Caco-2 (cell line): ENCODE measurements at regions of chr2 and their contacts with region 1.

Region 1: GRCh38 chr2:69734035-69734631 is 7.8 kb upstream of the ANXA4 start:
- DNase-seq: peak; percentile 61 to 77
- H3K4me3 ChIP-seq: no peak overlapping the region
- H3K4me3 Mint-ChIP-seq: no peak overlapping the region
- H3K27ac Mint-ChIP-seq: peak overlapping the region; percentile 81
- H3K4me1 ChIP-seq: peaks cover 23% of the 10 kb centered on the region
- H3K4me1 Mint-ChIP-seq: peaks cover 23% of the 10 kb centered on the region
- H3K27me3 ChIP-seq: no peaks in the 10 kb centered on the region
- H3K27me3 Mint-ChIP-seq: no peaks in the 10 kb centered on the region
- CTCF ChIP-seq: no peak

Region 2: DNA sequence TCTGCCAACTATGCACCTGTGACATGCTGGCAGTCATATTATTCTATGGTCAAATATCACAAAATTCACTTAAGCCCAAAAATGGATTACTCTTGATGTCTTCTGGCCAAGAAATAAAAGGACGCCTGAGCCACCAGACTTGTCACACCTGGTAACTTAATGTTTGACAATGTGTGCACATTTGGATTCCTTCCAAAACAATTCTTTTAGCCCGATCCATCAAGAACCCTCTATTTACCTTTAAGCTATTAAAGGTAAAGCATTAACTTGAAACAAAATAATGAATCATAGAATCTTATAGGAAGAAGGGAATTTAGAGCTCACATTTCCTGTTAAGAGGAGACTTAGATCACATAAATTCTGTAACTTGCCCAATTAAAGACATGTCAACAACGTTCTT is 250.4 kb before region 1 on chr2:
- CTCF ChIA-PET with region 1: no interaction called
- POLR2A ChIA-PET with region 1: no interaction called
- intact Hi-C with region 1: no loop called
- DNase-seq: no peak
- H3K4me3 ChIP-seq: no peak overlapping the region
- H3K4me3 Mint-ChIP-seq: no peak overlapping the region
- H3K27ac Mint-ChIP-seq: no peak overlapping the region
- H3K4me1 ChIP-seq: peaks cover 14% of the 10 kb centered on the region
- H3K4me1 Mint-ChIP-seq: peaks cover 16% of the 10 kb centered on the region
- H3K27me3 ChIP-seq: no peaks in the 10 kb centered on the region
- H3K27me3 Mint-ChIP-seq: no peaks in the 10 kb centered on the region
- CTCF ChIP-seq: no peak

Region 3: GRCh38 chr2:69781321-69782248 is 47.5 kb after region 1 on chr2:
- CTCF ChIA-PET with region 1: no interaction called
- POLR2A ChIA-PET with region 1: interaction called, 4 read pairs
- intact Hi-C with region 1: loop called (anchors 1 kb)
- DNase-seq: peak; percentile 67 to 79
- H3K4me3 ChIP-seq: no peak overlapping the region
- H3K4me3 Mint-ChIP-seq: no peak overlapping the region
- H3K27ac Mint-ChIP-seq: peak overlapping the region; percentile 16
- H3K4me1 ChIP-seq: peaks cover 62% of the 10 kb centered on the region
- H3K4me1 Mint-ChIP-seq: peaks cover 39% of the 10 kb centered on the region
- H3K27me3 ChIP-seq: no peaks in the 10 kb centered on the region
- H3K27me3 Mint-ChIP-seq: no peaks in the 10 kb centered on the region
- CTCF ChIP-seq: no peak